ENCODE measurements at regions of chr12 and their contacts with region 1.

Region 1: GRCh38 chr12:124927201-124928094 is 13.0 kb upstream of the UBC start:
- DNase-seq: peak; percentile 96
- ATAC-seq: peak; percentile 92
- H3K4me3 Mint-ChIP-seq: peak overlapping the region; percentile 79
- H3K27ac Mint-ChIP-seq: peak overlapping the region; percentile 93
- H3K4me1 Mint-ChIP-seq: peaks cover 27% of the 10 kb centered on the region
- H3K27me3 Mint-ChIP-seq: no peaks in the 10 kb centered on the region

Region 2: GRCh38 chr12:124847113-124848074 is 80.1 kb before region 1 on chr12:
- CTCF ChIA-PET with region 1: no interaction called
- DNase-seq: no peak
- ATAC-seq: no peak
- H3K4me3 Mint-ChIP-seq: no peak overlapping the region
- H3K27ac Mint-ChIP-seq: no peak overlapping the region
- H3K4me1 Mint-ChIP-seq: peaks cover 5% of the 10 kb centered on the region
- H3K27me3 Mint-ChIP-seq: no peaks in the 10 kb centered on the region

Region 3: GRCh38 chr12:124917135-124917840 is 10.2 kb before region 1 on chr12:
- CTCF ChIA-PET with region 1: interaction called, 20 read pairs
- DNase-seq: peak; percentile 98
- ATAC-seq: peak; percentile 72
- H3K4me3 Mint-ChIP-seq: peak overlapping the region; percentile 98
- H3K27ac Mint-ChIP-seq: peak overlapping the region; percentile 100
- H3K4me1 Mint-ChIP-seq: peaks cover 83% of the 10 kb centered on the region
- H3K27me3 Mint-ChIP-seq: peaks cover 4% of the 10 kb centered on the region

Measured in activated CD8-positive, alpha-beta memory T cell treated with anti-CD3 and anti-CD28 coated beads, Interleukin-2, amount 10 ng/mL, durations not matched to agents 7 days and 5 days (primary cell).